ENCODE measurements at regions of chr12 and their contacts with region 1.

Region 1: DNA sequence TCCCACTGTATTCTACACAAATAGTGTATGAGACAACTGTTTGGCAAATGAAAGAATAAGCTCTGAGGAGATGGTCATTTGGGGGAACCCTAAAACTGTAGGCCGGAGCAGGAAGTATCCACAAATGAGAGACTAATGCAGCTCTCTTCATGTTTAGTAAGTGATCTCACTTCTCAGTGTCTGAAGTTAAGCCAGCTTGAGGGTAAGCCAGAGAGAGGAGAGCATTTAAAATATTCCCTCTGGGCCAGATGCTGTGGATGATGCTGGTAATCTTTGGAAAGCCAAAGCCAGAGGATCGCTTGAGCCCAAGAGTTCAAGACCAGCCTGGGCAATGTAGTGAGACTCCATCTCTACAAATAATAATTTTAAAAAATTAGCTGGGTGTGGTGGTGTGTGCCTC is 130.6 kb upstream of the SINHCAF start:
- DNase-seq: no peak
- H3K4me3 ChIP-seq: no peak overlapping the region
- H3K4me3 Mint-ChIP-seq: no peak overlapping the region
- H3K27ac Mint-ChIP-seq: no peak overlapping the region
- H3K4me1 ChIP-seq: no peaks in the 10 kb centered on the region
- H3K4me1 Mint-ChIP-seq: no peaks in the 10 kb centered on the region
- H3K27me3 ChIP-seq: no peaks in the 10 kb centered on the region
- H3K27me3 Mint-ChIP-seq: no peaks in the 10 kb centered on the region
- CTCF ChIP-seq: no peak

Region 2: DNA sequence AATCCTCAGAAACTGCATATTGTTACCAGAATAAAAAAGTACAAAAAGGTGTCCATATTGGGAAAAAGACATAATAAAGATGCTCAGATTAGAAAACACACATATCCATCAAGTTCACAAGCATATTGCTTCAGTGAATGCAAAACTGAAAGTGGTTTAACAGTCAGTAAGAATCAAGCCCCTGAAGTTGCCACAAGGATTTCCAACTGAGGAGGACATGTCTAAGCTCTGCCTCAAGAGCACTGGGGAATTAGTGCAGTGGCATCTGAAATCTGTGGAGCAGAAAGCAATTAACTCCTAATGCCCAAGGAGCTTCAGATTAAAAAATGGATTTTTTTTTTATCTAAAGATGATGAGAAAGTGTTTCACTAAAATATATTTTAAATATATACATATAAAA is 21.1 kb after region 1 on chr12:
- CTCF ChIA-PET with region 1: no interaction called
- POLR2A ChIA-PET with region 1: no interaction called
- intact Hi-C with region 1: loop called (anchors 2 kb)
- DNase-seq: no peak
- H3K4me3 ChIP-seq: no peak overlapping the region
- H3K4me3 Mint-ChIP-seq: no peak overlapping the region
- H3K27ac Mint-ChIP-seq: no peak overlapping the region
- H3K4me1 ChIP-seq: no peaks in the 10 kb centered on the region
- H3K4me1 Mint-ChIP-seq: peaks cover 20% of the 10 kb centered on the region
- H3K27me3 ChIP-seq: no peaks in the 10 kb centered on the region
- H3K27me3 Mint-ChIP-seq: no peaks in the 10 kb centered on the region
- CTCF ChIP-seq: no peak

Region 3: GRCh38 chr12:31507966-31508365 is 51.4 kb after region 1 on chr12:
- CTCF ChIA-PET with region 1: no interaction called
- POLR2A ChIA-PET with region 1: no interaction called
- intact Hi-C with region 1: no loop called
- DNase-seq: no peak
- H3K4me3 ChIP-seq: no peak overlapping the region
- H3K4me3 Mint-ChIP-seq: no peak overlapping the region
- H3K27ac Mint-ChIP-seq: no peak overlapping the region
- H3K4me1 ChIP-seq: 0 out of 2 replicates have a peak, but pooled peaks cover 4% of the 10 kb centered on the region
- H3K4me1 Mint-ChIP-seq: no peaks in the 10 kb centered on the region
- H3K27me3 ChIP-seq: no peaks in the 10 kb centered on the region
- H3K27me3 Mint-ChIP-seq: no peaks in the 10 kb centered on the region
- CTCF ChIP-seq: no peak

Measured in Caco-2 (cell line).